Dorsolateral prefrontal cortex (tissue), 120 donors: ENCODE measurements at regions of chr1 and their contacts with region 1.

Region 1: GRCh38 chr1:59971464-59971911 is 44.9 kb upstream of the CYP2J2 start:
- DNase-seq: peak; percentile 60 to 87 (median 74)
- H3K4me3 ChIP-seq: peak overlapping the region in 41 of 59 donors; percentile 2 to 57 (median 36)
- H3K27ac ChIP-seq: peak overlapping the region in 7 of 59 donors; percentile 10 to 71 (median 43)
- H3K27me3 ChIP-seq: no peaks in the 10 kb centered on the region
- CTCF ChIP-seq: peak; percentile 76 to 96 (median 91)

Region 2: GRCh38 chr1:59767119-59767518 is 204.4 kb before region 1 on chr1:
- intact Hi-C with region 1: no loop called
- DNase-seq: no peak
- H3K4me3 ChIP-seq: no peak overlapping the region
- H3K27ac ChIP-seq: no peak overlapping the region
- H3K27me3 ChIP-seq: no peaks in the 10 kb centered on the region
- CTCF ChIP-seq: no peak

Region 3: DNA sequence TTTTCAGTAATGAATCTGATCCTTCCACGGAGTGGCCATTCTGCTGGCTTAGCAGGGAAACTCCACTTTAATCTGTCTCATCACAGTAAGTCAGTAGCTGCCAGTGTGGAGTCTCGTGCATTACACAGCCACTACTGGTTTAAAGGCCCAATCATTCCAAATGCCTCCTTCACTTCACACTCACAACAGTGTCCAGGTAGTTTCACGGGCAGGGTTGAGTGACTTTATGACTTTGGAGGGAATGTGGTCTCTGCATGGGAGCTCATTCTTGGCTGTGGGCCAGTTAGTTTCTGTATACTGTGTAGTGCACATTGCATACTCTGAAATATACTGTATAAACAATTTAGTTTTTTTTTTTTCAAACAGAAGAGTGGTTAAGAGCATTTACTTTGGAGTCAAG is 136.7 kb after region 1 on chr1:
- intact Hi-C with region 1: no loop called
- DNase-seq: no peak
- H3K4me3 ChIP-seq: no peak overlapping the region
- H3K27ac ChIP-seq: no peak overlapping the region
- H3K27me3 ChIP-seq: no peaks in the 10 kb centered on the region
- CTCF ChIP-seq: no peak

Region 4: DNA sequence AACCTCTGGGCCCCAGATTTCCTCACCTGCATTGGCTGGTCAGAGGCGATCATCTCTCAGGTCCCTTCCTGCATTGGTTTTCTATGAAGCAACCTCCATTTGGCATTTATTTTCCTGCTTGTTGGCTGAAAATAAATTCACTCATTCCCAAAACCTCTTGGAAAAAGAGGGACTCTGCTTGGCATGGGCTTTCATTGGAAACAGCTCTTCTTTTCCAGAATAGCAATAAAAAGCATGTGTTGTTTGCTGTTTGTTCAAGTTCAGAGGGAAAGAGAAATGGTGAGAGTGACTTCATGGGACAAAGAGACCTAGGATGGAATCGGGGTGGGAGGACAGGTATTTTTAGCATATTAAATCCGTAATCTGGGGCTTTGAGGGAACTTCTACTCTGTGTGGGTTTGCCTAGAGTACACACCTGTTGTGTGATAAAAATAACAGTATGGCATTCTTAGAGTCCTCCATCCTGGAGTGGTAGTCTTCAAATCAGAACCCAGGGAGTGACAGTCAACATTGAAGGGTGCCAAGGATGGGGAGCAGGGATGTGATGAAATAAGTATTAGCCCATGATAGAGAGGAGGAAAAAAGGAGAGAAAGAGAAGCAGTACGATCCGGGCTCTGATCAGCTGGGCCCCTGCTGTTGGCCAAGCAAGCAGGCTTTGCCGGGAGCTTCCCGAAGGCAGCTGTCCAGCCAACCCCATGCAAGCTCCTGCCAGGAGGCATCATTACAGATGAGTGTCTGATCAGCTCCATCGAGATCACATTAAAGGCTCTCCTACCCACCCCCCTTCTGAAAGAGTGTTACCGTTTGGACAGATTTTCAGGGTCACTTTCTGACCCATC is 979.0 kb after region 1 on chr1:
- intact Hi-C with region 1: loop called in 1 of 2 experiments (anchors 10 kb)
- DNase-seq: no peak
- H3K4me3 ChIP-seq: no peak overlapping the region
- H3K27ac ChIP-seq: no peak overlapping the region
- H3K27me3 ChIP-seq: peaks cover 0 to 31% (median 0%) of the 10 kb centered on the region in 45 donors
- CTCF ChIP-seq: no peak

Region 5: GRCh38 chr1:61851849-61852669 is 1880.6 kb after region 1 on chr1:
- intact Hi-C with region 1: loop called in 1 of 2 experiments (anchors 5 kb)
- DNase-seq: no peak
- H3K4me3 ChIP-seq: no peak overlapping the region
- H3K27ac ChIP-seq: peak overlapping the region in 23 of 59 donors; percentile 3 to 69 (median 38)
- H3K27me3 ChIP-seq: no peaks in the 10 kb centered on the region
- CTCF ChIP-seq: peak; percentile 51 to 90 (median 74)